ENCODE measurements at regions of chr2 and their contacts with region 1.

Region 1: DNA sequence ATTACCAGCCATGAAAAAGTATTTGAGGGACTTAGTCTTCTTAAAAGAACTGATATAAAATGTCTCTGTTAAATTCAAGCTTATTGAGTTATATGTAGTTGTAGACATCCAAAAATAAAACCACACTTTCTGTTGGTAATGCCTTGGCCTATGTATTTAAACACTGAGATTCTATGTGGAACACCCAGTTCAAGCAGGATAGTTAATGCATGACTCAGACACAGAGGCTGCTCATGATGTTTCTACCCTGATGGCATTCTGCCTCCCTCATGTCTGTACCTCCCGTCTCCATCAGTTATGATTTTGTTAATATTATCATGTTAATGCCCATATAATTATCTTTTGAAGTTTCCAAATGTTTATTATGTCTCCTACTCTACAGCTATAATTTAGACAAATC is 164.5 kb downstream of the XIRP2 start:
- DNase-seq: no peak
- ATAC-seq: no peak
- H3K4me3 ChIP-seq: no peak overlapping the region
- H3K4me3 Mint-ChIP-seq: no peak overlapping the region
- H3K27ac ChIP-seq: no peak overlapping the region
- H3K27ac Mint-ChIP-seq: no peak overlapping the region
- H3K4me1 ChIP-seq: no peaks in the 10 kb centered on the region
- H3K4me1 Mint-ChIP-seq: no peaks in the 10 kb centered on the region
- H3K27me3 ChIP-seq: no peaks in the 10 kb centered on the region
- H3K27me3 Mint-ChIP-seq: no peaks in the 10 kb centered on the region
- CTCF ChIP-seq: no peak

Region 2: GRCh38 chr2:167001165-167001564 is 51.7 kb before region 1 on chr2:
- CTCF ChIA-PET with region 1: no interaction called
- POLR2A ChIA-PET with region 1: no interaction called
- intact Hi-C with region 1: loop called in 1 of 2 experiments (anchors 5 kb)
- DNase-seq: no peak
- ATAC-seq: no peak
- H3K4me3 ChIP-seq: no peak overlapping the region
- H3K4me3 Mint-ChIP-seq: no peak overlapping the region
- H3K27ac ChIP-seq: no peak overlapping the region
- H3K27ac Mint-ChIP-seq: no peak overlapping the region
- H3K4me1 ChIP-seq: no peaks in the 10 kb centered on the region
- H3K4me1 Mint-ChIP-seq: no peaks in the 10 kb centered on the region
- H3K27me3 ChIP-seq: no peaks in the 10 kb centered on the region
- H3K27me3 Mint-ChIP-seq: no peaks in the 10 kb centered on the region
- CTCF ChIP-seq: no peak

Region 3: GRCh38 chr2:167595839-167596471 is 543.1 kb after region 1 on chr2:
- CTCF ChIA-PET with region 1: no interaction called
- POLR2A ChIA-PET with region 1: no interaction called
- intact Hi-C with region 1: no loop called
- DNase-seq: no peak
- ATAC-seq: no peak
- H3K4me3 ChIP-seq: no peak overlapping the region
- H3K4me3 Mint-ChIP-seq: no peak overlapping the region
- H3K27ac ChIP-seq: no peak overlapping the region
- H3K27ac Mint-ChIP-seq: no peak overlapping the region
- H3K4me1 ChIP-seq: no peaks in the 10 kb centered on the region
- H3K4me1 Mint-ChIP-seq: no peaks in the 10 kb centered on the region
- H3K27me3 ChIP-seq: no peaks in the 10 kb centered on the region
- H3K27me3 Mint-ChIP-seq: no peaks in the 10 kb centered on the region
- CTCF ChIP-seq: no peak